Keratinocyte (primary cell): ENCODE measurements at regions of chr10 and their contacts with region 1.

Region 1: GRCh38 chr10:14185316-14186045 is 145.2 kb downstream of the FRMD4A start:
- DNase-seq: peak; percentile 44
- H3K4me3 ChIP-seq: peak overlapping the region in 2 of 3 experiments; percentile 43 to 53
- H3K27ac ChIP-seq: peak overlapping the region; percentile 98
- H3K4me1 ChIP-seq: peaks cover 9% of the 10 kb centered on the region
- H3K27me3 ChIP-seq: peaks cover 13% of the 10 kb centered on the region
- CTCF ChIP-seq: peak; percentile 17 to 38 (median 23)

Region 2: GRCh38 chr10:13939391-13939790 is 246.1 kb before region 1 on chr10:
- dilution Hi-C with region 1: no loop called
- DNase-seq: no peak
- H3K4me3 ChIP-seq: no peak overlapping the region
- H3K27ac ChIP-seq: no peak overlapping the region
- H3K4me1 ChIP-seq: no peaks in the 10 kb centered on the region
- H3K27me3 ChIP-seq: no peaks in the 10 kb centered on the region
- CTCF ChIP-seq: no peak

Region 3: GRCh38 chr10:14244147-14244546 is 58.7 kb after region 1 on chr10:
- dilution Hi-C with region 1: no loop called
- DNase-seq: no peak
- H3K4me3 ChIP-seq: no peak overlapping the region
- H3K27ac ChIP-seq: no peak overlapping the region
- H3K4me1 ChIP-seq: peaks cover 10% of the 10 kb centered on the region
- H3K27me3 ChIP-seq: peaks cover 3% of the 10 kb centered on the region
- CTCF ChIP-seq: peak in 1 of 3 experiments; percentile 9

Region 4: DNA sequence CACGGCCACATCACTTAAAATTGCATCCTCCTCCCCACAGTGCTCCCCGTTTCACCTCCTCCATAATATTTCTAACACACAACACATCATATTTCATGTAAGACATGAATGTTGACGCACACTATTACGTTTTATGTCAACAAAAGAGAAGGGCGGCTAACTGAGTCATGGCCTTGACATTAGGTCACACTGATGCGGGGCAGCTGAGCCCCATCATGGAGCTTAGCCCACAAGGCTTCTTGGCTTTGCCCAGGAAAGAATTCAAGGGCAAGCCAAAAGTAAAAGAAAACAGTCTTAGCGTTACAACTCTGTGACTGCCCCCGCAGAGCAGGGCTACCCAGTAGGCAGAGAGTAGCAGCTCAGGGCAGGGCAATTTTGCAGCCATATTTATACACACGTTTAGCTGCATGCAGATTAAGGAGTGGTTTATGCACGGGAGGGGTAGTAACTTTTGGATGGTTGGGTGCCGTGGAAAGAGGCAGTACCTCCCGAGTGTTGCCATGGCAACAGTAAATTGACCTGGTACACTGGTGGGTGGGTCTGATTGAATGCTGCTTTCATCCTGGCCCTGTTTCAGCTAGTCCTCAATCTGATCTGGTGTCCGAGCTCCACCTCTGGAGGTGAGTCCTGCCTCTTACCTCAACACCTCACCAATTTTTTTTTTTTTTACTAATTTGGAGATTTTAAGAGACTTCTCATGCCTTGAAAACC is 301.5 kb after region 1 on chr10:
- dilution Hi-C with region 1: loop called (anchors 10 kb)
- DNase-seq: no peak
- H3K4me3 ChIP-seq: no peak overlapping the region
- H3K27ac ChIP-seq: no peak overlapping the region
- H3K4me1 ChIP-seq: no peaks in the 10 kb centered on the region
- H3K27me3 ChIP-seq: no peaks in the 10 kb centered on the region
- CTCF ChIP-seq: no peak